Heart left ventricle (tissue), 16 donors: ENCODE measurements at regions of chr11 and their contacts with region 1.

Region 1: DNA sequence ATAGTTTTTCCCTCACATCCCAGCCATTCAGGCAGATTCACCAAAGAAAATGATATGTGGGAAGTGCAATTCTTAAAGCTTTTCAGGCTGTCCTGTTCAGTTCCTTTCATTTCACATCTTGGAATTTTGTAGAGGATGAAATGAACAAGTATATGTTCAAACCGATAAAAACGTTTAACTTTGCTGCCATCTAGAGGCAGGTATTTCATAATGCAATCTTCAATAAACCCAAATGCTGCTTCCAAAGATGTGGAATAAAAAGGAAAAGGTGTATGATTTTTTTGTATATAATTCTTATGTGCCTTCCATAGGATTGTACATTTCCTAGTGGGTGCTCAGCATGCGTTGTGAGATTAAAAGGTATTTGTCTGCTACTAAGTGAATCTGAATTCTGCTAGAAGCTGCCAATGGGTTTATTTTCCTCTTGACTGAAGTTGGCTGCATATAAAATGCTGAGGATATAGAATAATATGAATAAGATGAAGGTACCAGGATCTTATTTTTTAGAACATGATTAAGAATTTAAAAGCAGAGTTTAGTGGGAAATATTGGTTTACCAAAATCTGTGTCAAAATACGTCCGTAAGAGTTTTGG is 199.3 kb downstream of the PGR start:
- DNase-seq: no peak
- ATAC-seq: peak in 3 of 4 donors; percentile 38 to 72 (median 49)
- H3K4me3 ChIP-seq: no peak overlapping the region
- H3K27ac ChIP-seq: no peak overlapping the region
- H3K4me1 ChIP-seq: no peaks in the 10 kb centered on the region
- H3K27me3 ChIP-seq: no peaks in the 10 kb centered on the region
- CTCF ChIP-seq: peak; percentile 49 to 77 (median 69)
- POLR2A ChIP-seq: no peak

Region 2: DNA sequence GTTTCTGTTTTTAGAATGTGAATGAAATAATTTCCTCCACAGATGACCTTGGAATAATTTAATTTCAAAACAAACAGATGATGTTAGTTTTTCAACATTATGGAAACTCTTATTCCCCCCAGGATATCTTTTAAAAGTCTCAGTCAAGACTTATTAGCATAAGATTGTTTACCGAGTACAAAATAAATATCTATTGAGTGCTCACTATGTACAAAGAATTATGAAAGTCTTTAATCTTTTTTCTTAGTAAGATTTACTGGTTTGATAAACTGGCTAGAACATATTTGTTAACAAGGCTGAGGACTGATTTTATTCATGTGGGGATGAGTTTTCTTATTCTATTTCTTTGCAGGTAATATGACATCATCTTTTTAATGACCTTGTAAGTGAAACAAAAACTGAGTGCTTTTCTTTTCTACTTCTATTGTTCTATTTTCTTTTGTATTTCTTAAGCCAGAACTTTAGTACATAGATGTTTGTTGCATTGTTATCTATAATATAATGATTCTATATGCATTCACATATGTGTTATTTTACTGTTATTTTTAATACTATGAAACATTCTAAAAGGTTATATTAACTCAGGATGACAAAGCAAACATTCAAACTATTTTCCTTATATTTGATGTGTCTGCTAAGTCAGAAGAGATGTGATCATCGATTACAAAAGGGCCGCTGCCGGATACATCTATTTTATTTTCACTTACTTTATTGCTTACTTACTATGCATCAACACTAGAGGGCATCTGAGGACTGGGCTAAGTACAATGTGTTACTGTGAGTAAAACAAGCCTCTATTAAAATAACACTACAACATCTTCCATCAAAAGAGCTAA is 354.2 kb before region 1 on chr11:
- intact Hi-C with region 1: loop called (anchors 1 to 5 kb)
- DNase-seq: peak in 1 of 5 donors; percentile 12
- ATAC-seq: peak in 3 of 4 donors; percentile 77 to 84 (median 80)
- H3K4me3 ChIP-seq: peak overlapping the region in 3 of 12 donors; percentile 17 to 27 (median 26)
- H3K27ac ChIP-seq: no peak overlapping the region
- H3K4me1 ChIP-seq: peaks cover 0 to 4% (median 0%) of the 10 kb centered on the region in 12 donors
- H3K27me3 ChIP-seq: no peaks in the 10 kb centered on the region
- CTCF ChIP-seq: peak; percentile 67 to 90 (median 73)
- POLR2A ChIP-seq: no peak

Region 3: DNA sequence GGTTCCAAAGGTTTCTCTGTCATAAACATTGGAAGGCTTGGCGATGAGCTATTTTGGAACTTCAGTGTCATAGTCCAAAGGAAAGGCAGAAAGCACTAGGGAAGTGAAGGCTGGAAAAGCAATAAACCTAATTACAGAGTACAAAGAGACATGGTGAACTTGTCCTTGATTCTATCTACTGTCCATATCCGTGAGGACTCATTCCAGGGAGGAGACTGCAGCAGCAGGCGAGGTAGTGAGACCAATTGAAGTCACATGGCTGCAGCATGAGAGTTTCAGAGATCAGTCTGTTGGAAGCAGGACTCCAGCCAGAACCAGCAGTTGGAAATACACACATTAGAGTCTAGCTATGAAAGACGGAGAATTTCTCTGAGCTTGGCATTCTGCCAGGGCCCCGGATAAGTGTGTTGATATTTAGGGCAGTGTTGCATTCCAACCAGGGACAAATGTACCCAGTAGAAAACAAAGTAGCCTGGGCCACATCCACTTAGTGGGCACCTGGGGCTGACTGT is 297.3 kb before region 1 on chr11:
- intact Hi-C with region 1: loop called in 1 of 10 experiments (anchors 5 kb)
- DNase-seq: peak; percentile 65 to 88 (median 77)
- ATAC-seq: peak; percentile 90 to 95 (median 93)
- H3K4me3 ChIP-seq: peak overlapping the region in 3 of 12 donors; percentile 8 to 23 (median 11)
- H3K27ac ChIP-seq: peak overlapping the region in 11 of 12 donors; percentile 36 to 83 (median 60)
- H3K4me1 ChIP-seq: peaks cover 0 to 33% (median 14%) of the 10 kb centered on the region in 12 donors
- H3K27me3 ChIP-seq: no peaks in the 10 kb centered on the region
- CTCF ChIP-seq: no peak
- POLR2A ChIP-seq: no peak

Region 4: GRCh38 chr11:100681064-100681502 is 249.2 kb before region 1 on chr11:
- intact Hi-C with region 1: loop called (anchors 2 to 5 kb)
- DNase-seq: peak; percentile 35 to 69 (median 55)
- ATAC-seq: peak; percentile 15 to 68 (median 58)
- H3K4me3 ChIP-seq: no peak overlapping the region
- H3K27ac ChIP-seq: no peak overlapping the region
- H3K4me1 ChIP-seq: peaks cover 0 to 23% (median 9%) of the 10 kb centered on the region in 12 donors
- H3K27me3 ChIP-seq: no peaks in the 10 kb centered on the region
- CTCF ChIP-seq: no peak
- POLR2A ChIP-seq: no peak

Region 5: DNA sequence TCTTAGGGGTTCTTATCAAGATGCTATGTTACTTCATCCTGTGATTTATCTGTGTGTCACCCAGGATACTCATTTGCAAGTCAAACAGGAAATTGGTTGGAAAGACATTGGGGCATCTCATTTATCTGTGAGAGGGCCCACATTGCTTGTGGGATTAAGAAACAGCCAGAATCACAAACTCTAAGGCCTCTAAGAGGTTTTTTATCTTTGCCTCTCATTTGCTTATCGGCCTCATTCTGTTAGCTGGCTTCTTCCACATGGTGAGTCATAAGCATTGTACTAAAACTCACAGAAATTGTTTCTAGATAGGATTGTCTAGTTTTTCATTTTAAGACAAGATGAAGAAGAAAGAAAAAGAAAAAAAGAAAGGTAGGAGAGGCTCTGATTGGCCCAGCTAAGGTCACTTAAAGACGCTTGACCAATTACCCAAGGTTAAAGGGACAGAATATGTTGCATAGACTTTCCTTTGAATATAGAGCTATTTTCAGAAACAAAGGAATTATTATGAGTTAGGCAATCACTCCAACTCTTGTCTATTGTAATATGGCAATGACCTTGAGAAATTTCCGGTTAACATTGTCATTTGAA is 121.3 kb before region 1 on chr11:
- intact Hi-C with region 1: no loop called
- DNase-seq: no peak
- ATAC-seq: peak in 1 of 4 donors; percentile 43
- H3K4me3 ChIP-seq: no peak overlapping the region
- H3K27ac ChIP-seq: peak overlapping the region in 5 of 12 donors; percentile 7 to 38 (median 18)
- H3K4me1 ChIP-seq: peaks cover 0 to 18% (median 7%) of the 10 kb centered on the region in 12 donors
- H3K27me3 ChIP-seq: no peaks in the 10 kb centered on the region
- CTCF ChIP-seq: no peak
- POLR2A ChIP-seq: no peak

Region 6: GRCh38 chr11:100849009-100849900 is 81.0 kb before region 1 on chr11:
- intact Hi-C with region 1: loop called in 1 of 10 experiments (anchors 5 kb)
- DNase-seq: no peak
- ATAC-seq: peak in 3 of 4 donors; percentile 47 to 86 (median 62)
- H3K4me3 ChIP-seq: peak overlapping the region in 2 of 12 donors; percentile 7 to 8
- H3K27ac ChIP-seq: peak overlapping the region in 9 of 12 donors; percentile 13 to 61 (median 36)
- H3K4me1 ChIP-seq: peaks cover 0 to 28% (median 17%) of the 10 kb centered on the region in 12 donors
- H3K27me3 ChIP-seq: no peaks in the 10 kb centered on the region
- CTCF ChIP-seq: no peak
- POLR2A ChIP-seq: no peak

Region 7: GRCh38 chr11:100855466-100856067 is 74.7 kb before region 1 on chr11:
- intact Hi-C with region 1: loop called in 7 of 10 experiments (anchors 5 kb)
- DNase-seq: no peak
- ATAC-seq: peak in 1 of 4 donors; percentile 51
- H3K4me3 ChIP-seq: no peak overlapping the region
- H3K27ac ChIP-seq: no peak overlapping the region
- H3K4me1 ChIP-seq: peaks cover 0 to 8% (median 2%) of the 10 kb centered on the region in 12 donors
- H3K27me3 ChIP-seq: no peaks in the 10 kb centered on the region
- CTCF ChIP-seq: peak; percentile 48 to 81 (median 71)
- POLR2A ChIP-seq: no peak

Region 8: GRCh38 chr11:100863080-100863581 is 67.2 kb before region 1 on chr11:
- intact Hi-C with region 1: loop called in 6 of 10 experiments (anchors 5 kb)
- DNase-seq: peak in 4 of 5 donors; percentile 47 to 59 (median 50)
- ATAC-seq: peak; percentile 75 to 97 (median 88)
- H3K4me3 ChIP-seq: no peak overlapping the region
- H3K27ac ChIP-seq: peak overlapping the region in 9 of 12 donors; percentile 7 to 56 (median 35)
- H3K4me1 ChIP-seq: peaks cover 0 to 14% (median 7%) of the 10 kb centered on the region in 12 donors
- H3K27me3 ChIP-seq: no peaks in the 10 kb centered on the region
- CTCF ChIP-seq: no peak
- POLR2A ChIP-seq: no peak

Region 9: DNA sequence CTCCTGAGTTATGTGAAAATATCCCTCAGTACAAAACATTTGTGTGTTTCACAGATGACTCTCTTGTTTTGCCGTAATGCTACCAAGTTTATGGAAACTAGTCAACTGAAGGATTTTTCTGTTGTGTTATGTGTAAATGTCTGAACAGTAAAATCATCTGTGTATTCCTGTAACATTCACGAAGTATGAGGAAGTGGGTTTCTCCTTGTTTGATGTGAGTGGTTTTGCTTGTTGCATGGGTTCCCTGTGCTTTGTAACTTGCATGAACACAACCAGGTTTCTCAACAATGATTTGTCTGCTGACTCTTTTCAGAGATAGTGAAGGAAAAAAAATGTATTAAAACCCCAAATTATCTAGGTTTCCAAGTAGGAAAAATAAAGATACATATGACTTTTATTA is 61.3 kb after region 1 on chr11:
- intact Hi-C with region 1: no loop called
- DNase-seq: no peak
- ATAC-seq: no peak
- H3K4me3 ChIP-seq: no peak overlapping the region
- H3K27ac ChIP-seq: no peak overlapping the region
- H3K4me1 ChIP-seq: peaks cover 0 to 10% (median 2%) of the 10 kb centered on the region in 12 donors
- H3K27me3 ChIP-seq: no peaks in the 10 kb centered on the region
- CTCF ChIP-seq: no peak
- POLR2A ChIP-seq: no peak

Region 10: GRCh38 chr11:102220728-102221467 is 1290.6 kb after region 1 on chr11:
- intact Hi-C with region 1: no loop called
- DNase-seq: no peak
- ATAC-seq: no peak
- H3K4me3 ChIP-seq: no peak overlapping the region
- H3K27ac ChIP-seq: no peak overlapping the region
- H3K4me1 ChIP-seq: peaks cover 0 to 28% (median 10%) of the 10 kb centered on the region in 12 donors
- H3K27me3 ChIP-seq: no peaks in the 10 kb centered on the region
- CTCF ChIP-seq: no peak
- POLR2A ChIP-seq: no peak